ENCODE measurements at regions of chr3 and their contacts with region 1.

Region 1: DNA sequence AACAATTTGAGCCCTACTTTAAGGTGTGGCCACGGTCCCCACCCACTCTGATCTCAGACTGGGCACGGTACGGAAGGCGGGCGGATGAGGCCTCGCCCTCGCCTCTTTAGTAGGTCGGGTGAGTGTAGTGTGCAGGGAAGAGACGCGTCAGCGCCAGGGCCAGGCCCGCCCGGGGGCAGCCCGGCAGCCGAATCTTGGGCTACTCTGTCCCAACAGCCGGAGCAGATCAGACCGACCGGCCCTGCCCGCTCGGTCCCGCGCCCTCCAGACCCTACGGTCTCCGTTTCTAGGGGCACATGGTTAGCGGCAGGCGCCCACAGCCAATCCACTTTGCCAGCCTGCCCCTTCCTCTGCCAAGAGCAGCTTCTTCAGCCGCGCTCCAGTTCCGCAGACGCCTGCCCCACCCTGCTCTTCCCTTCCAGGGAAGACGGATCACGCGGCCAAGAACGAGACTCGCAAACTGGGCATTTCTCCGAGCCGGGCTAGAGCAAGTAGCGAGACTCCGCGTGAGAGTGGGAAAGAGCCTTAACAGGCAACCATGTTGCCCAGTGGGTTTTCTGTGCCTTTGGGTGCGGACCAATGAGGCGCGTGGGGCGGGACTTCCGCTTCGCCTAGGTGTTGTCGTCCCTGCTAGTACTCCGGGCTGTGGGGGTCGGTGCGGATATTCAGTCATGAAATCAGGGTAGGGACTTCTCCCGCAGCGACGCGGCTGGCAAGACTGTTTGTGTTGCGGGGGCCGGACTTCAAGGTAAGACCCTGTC is at the start of gene RNF13:
- DNase-seq: peak; percentile 96 to 98
- ATAC-seq: peak; percentile 96 to 98 (median 98)
- H3K4me3 ChIP-seq: peak within 1 kb of the TSS; percentile 60 to 84 (median 80)
- H3K27ac ChIP-seq: peak within 1 kb of the TSS; percentile 94 to 99 (median 98)
- H3K4me1 ChIP-seq: peaks cover 0 to 51% (median 42%) of the 10 kb centered on the region in 9 donors
- H3K27me3 ChIP-seq: no peaks in the 10 kb centered on the region
- CTCF ChIP-seq: no peak
- total RNA-seq, gene RNF13: 46.6 to 72.3 (median 55.5) TPM

Region 2: GRCh38 chr3:149494022-149494758 is 318.6 kb before region 1 on chr3:
- intact Hi-C with region 1: loop called in 1 of 10 experiments (anchors 10 kb)
- DNase-seq: peak; percentile 35 to 65
- ATAC-seq: peak in 5 of 8 donors; percentile 59 to 71 (median 62)
- H3K4me3 ChIP-seq: no peak overlapping the region
- H3K27ac ChIP-seq: no peak overlapping the region
- H3K4me1 ChIP-seq: peaks cover 0 to 14% (median 0%) of the 10 kb centered on the region in 9 donors
- H3K27me3 ChIP-seq: peaks cover 0 to 20% (median 0%) of the 10 kb centered on the region in 7 donors
- CTCF ChIP-seq: peak; percentile 70 to 89 (median 80)

Region 3: DNA sequence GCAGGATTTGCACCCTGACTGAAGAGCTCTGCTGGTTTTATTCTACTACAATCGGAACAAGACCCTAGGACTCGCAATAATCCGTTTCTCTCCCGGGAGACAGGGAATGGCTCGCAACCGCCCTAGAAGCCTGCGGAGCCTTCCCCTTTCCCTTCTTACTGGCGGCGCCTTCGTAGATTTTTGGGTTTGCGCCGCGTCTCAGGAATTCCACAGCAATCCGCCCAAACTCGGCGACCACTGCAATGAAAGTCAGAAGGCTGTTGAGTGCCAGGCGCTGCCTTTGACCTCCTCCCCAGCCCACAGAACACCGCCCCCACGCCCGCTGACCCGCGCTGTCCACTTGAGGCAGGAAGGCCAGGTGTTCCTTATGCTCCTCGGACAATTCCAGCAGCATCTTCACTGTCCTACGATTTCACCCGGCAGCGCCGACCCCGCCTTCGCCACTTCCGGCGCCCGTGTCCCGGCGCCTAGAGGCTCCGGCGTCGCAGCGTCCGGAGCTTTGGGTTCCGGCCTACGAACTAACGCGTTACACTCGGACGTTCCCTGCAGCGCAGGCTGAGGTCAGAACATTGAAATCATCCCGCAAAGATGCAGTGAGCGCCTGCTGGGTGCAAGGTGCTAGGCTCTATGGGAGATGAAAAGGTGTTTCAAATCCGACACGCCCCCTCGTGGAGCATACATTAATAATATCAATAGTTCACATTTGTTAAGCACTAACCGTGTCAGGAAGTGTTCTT is 60.6 kb before region 1 on chr3 and contains the start of gene COMMD2:
- intact Hi-C with region 1: loop called in 2 of 10 experiments (anchors 5 kb)
- DNase-seq: peak; percentile 63 to 72
- ATAC-seq: peak; percentile 95 to 99 (median 98)
- H3K4me3 ChIP-seq: peak within 1 kb of the TSS; percentile 66 to 93 (median 82)
- H3K27ac ChIP-seq: peak within 1 kb of the TSS; percentile 18 to 84 (median 76)
- H3K4me1 ChIP-seq: peaks cover 5 to 22% (median 17%) of the 10 kb centered on the region in 9 donors
- H3K27me3 ChIP-seq: no peaks in the 10 kb centered on the region
- CTCF ChIP-seq: peak in 7 of 9 donors; percentile 26 to 59 (median 40)
- total RNA-seq, gene COMMD2: 14.1 to 22.9 (median 19.0) TPM

Region 4: GRCh38 chr3:149765762-149766334 is 46.9 kb before region 1 on chr3:
- intact Hi-C with region 1: loop called in 2 of 10 experiments (anchors 5 kb)
- DNase-seq: no peak
- ATAC-seq: no peak
- H3K4me3 ChIP-seq: no peak overlapping the region
- H3K27ac ChIP-seq: no peak overlapping the region
- H3K4me1 ChIP-seq: no peaks in the 10 kb centered on the region
- H3K27me3 ChIP-seq: peaks cover 0 to 34% (median 15%) of the 10 kb centered on the region in 7 donors
- CTCF ChIP-seq: peak in 7 of 9 donors; percentile 31 to 54 (median 42)

Region 5: DNA sequence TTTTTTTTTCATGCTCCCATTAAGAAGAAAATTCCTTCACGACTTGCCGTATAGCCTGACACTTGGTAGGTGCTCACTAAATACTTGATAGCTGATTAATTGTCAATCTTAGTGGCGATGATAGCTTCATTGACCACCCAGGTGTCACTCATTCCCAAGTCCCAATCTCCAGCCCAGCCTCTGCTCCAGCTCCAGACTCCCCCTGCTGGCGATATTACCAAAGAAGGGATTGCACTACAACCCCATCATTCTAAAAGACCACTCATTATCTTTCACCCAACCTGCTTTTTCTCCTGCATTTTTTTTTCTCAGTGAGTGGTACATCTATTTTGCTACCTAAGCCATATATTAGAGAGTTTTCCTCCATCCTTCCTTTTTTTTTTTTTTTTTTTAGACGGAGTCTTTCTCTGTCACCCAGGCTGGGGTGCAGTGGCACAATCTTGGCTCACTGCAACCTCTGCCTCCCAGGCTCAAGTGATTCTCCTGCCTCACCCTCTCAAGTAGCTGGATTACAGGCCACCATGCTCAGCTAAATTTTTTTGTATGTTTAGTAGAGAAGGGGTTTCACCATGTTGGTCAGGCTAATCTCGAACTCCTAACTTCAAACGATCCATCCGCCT is 41.0 kb before region 1 on chr3:
- intact Hi-C with region 1: loop called in 2 of 10 experiments (anchors 5 kb)
- DNase-seq: peak; percentile 18 to 60
- ATAC-seq: peak in 4 of 8 donors; percentile 56 to 67 (median 61)
- H3K4me3 ChIP-seq: no peak overlapping the region
- H3K27ac ChIP-seq: no peak overlapping the region
- H3K4me1 ChIP-seq: no peaks in the 10 kb centered on the region
- H3K27me3 ChIP-seq: peaks cover 0 to 7% (median 0%) of the 10 kb centered on the region in 7 donors
- CTCF ChIP-seq: peak; percentile 42 to 85 (median 74)

Measured in heart right ventricle (tissue), 16 donors.